Activated B cell treated with CpG ODN at 0.5 μM for 24 hours (primary cell): ENCODE measurements at regions of chr15 and their contacts with region 1.

Region 1: GRCh38 chr15:45198337-45199135 is 10.8 kb upstream of the SHF start:
- DNase-seq: peak; percentile 88
- ATAC-seq: peak; percentile 66
- H3K4me3 Mint-ChIP-seq: no peak overlapping the region
- H3K27ac Mint-ChIP-seq: no peak overlapping the region
- H3K4me1 Mint-ChIP-seq: peaks cover 10% of the 10 kb centered on the region
- H3K27me3 Mint-ChIP-seq: no peaks in the 10 kb centered on the region
- CTCF ChIP-seq: no peak

Region 2: GRCh38 chr15:45022871-45023658 is 175.5 kb before region 1 on chr15 and contains the start of gene SORD:
- CTCF ChIA-PET with region 1: no interaction called
- POLR2A ChIA-PET with region 1: no interaction called
- intact Hi-C with region 1: loop called (anchors 2 kb)
- DNase-seq: peak; percentile 91
- ATAC-seq: peak; percentile 100
- H3K4me3 Mint-ChIP-seq: peak within 1 kb of the TSS; percentile 89
- H3K27ac Mint-ChIP-seq: no peak within 1 kb of the TSS
- H3K4me1 Mint-ChIP-seq: peaks cover 27% of the 10 kb centered on the region
- H3K27me3 Mint-ChIP-seq: peaks cover 15% of the 10 kb centered on the region
- CTCF ChIP-seq: no peak
- total RNA-seq, gene SORD: 15.1 and 15.5 TPM in 2 replicates

Region 3: DNA sequence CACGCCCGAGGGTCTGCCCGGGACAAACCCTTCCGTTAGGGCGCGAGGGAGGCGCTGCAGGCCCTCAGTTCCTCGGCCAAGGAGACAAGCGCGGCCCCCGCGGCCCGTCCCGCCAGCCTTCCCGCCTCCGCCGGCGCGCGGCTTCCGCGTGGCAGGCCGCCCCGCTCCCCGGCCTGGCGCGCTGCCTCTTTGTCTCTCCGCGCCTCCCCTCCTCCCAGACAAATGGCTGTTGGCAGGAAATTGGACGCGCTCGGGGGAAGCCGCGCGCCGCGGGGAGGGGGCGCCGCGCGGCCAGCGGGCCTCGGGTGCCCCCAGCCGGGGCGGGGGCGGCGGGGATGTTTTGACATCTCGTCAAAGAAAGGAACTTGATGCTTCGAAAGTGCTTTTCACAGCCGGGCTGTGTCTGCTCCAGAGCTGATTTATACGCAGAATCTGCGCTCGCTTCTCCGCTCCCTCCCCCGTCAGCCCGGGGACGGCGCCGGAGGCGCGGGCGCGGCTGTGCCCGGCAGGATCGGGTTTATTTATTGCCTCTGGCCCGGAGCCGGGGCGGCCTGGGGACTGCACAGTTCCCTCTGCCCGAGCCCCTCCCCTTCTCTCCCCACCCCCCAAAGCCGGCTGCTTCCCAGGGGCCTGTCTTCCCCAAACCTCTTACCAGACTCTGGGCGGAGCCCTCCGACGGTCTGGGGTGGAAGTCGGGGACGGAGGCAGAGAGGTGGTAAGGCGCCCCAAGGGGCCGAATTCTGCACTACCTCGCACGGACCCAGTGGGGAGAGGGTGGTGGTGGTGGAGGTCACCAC is 31.5 kb before region 1 on chr15:
- CTCF ChIA-PET with region 1: interaction called, 9 read pairs
- POLR2A ChIA-PET with region 1: interaction called, 24 read pairs
- intact Hi-C with region 1: loop called (anchors 1 kb)
- DNase-seq: peak; percentile 75
- ATAC-seq: peak; percentile 95
- H3K4me3 Mint-ChIP-seq: peak overlapping the region; percentile 81
- H3K27ac Mint-ChIP-seq: peak overlapping the region; percentile 80
- H3K4me1 Mint-ChIP-seq: peaks cover 32% of the 10 kb centered on the region
- H3K27me3 Mint-ChIP-seq: no peaks in the 10 kb centered on the region
- CTCF ChIP-seq: no peak

Region 4: GRCh38 chr15:45253330-45253729 is 54.8 kb after region 1 on chr15:
- CTCF ChIA-PET with region 1: no interaction called
- POLR2A ChIA-PET with region 1: no interaction called
- intact Hi-C with region 1: no loop called
- DNase-seq: no peak
- ATAC-seq: no peak
- H3K4me3 Mint-ChIP-seq: no peak overlapping the region
- H3K27ac Mint-ChIP-seq: no peak overlapping the region
- H3K4me1 Mint-ChIP-seq: no peaks in the 10 kb centered on the region
- H3K27me3 Mint-ChIP-seq: peaks cover 4% of the 10 kb centered on the region
- CTCF ChIP-seq: no peak

Region 5: DNA sequence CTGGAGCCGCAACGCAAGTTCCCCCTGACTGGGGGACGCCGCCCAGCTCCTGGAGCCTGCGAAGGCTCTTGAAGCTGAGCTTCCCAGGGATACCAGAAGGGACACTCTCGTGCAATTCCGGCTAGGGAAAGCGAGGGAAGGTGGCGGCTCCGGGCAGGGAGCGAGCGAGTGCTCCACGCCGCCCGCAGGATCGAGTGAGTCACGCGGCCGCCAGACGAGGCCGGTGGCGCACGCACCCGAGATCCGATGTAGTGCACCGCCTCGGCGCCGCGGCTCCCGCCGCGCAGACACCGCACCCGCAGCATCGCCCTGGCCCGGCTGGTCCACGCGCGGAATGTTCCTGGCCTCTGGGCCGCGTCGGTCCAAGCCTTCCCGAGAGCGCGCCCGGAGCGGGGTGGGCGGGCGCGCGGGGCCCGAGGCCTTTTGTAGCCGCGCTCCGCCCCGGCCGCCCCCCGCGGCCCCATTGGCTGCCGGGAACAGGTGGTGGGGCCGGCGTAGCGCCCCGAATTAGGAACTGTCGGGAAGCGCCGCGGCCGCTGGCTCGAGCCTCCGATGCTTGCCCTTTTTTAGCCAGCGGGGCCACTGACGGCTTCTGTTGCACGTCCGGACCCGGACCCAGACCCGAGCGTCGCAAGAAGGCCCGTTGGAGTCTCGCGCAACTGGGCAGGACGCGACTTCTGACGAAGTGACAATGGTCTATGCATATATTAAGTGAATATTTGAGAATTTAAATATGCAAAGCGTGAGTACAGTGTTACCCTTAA is 179.8 kb after region 1 on chr15 and contains the start of gene GATM:
- CTCF ChIA-PET with region 1: no interaction called
- POLR2A ChIA-PET with region 1: interaction called, 5 read pairs
- intact Hi-C with region 1: loop called (anchors 1 kb)
- DNase-seq: peak; percentile 64
- ATAC-seq: peak; percentile 85
- H3K4me3 Mint-ChIP-seq: peak within 1 kb of the TSS; percentile 87
- H3K27ac Mint-ChIP-seq: peak within 1 kb of the TSS; percentile 86
- H3K4me1 Mint-ChIP-seq: peaks cover 25% of the 10 kb centered on the region
- H3K27me3 Mint-ChIP-seq: peaks cover 2% of the 10 kb centered on the region
- CTCF ChIP-seq: no peak
- total RNA-seq, gene GATM: 12.6 and 15.7 TPM in 2 replicates

Region 6: DNA sequence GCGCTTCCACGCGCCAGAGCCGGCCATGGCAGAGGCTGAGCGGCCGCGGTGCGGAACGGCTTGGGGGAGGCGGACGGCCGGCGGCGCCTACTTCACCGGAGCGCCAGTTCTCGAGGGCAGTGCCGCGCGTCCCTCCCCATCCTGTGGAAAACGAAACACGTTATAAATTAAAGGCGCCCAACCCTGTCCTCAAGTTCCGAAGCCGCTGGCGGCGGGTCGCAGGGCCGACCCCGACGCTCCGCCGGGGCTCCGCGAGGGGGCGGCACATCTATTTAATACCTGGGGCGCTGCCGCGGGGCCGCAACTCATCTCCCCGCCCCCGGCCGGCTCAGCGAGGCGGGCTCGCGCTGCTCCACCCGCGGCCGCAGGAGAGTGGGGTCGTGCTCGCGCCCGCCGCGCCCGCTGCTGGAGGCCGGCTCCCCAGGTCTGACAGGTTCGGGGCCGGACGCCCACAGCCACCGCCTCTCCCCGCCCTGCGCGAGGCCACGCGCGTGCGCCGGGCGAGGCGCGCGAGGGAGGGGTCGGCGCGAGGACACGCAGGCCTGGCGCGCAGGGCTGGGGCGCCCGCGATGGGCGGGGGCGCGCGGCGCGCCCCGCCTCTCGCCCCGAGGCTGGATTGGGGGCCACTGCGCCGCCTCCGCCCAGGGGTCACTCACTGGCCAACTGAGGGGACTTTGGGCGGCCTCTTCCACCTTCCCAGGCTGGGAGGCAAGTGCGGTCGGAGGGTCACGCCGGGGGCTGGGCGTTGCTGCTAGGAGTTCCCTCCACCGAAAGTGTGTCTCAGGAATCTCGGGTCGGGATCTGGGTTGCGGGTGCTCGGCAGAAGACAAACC is 324.0 kb after region 1 on chr15 and contains the start of gene SLC30A4:
- CTCF ChIA-PET with region 1: no interaction called
- POLR2A ChIA-PET with region 1: interaction called, 6 read pairs
- intact Hi-C with region 1: loop called (anchors 5 kb)
- DNase-seq: peak; percentile 76
- ATAC-seq: peak; percentile 86
- H3K4me3 Mint-ChIP-seq: peak within 1 kb of the TSS; percentile 90
- H3K27ac Mint-ChIP-seq: peak within 1 kb of the TSS; percentile 83
- H3K4me1 Mint-ChIP-seq: peaks cover 42% of the 10 kb centered on the region
- H3K27me3 Mint-ChIP-seq: no peaks in the 10 kb centered on the region
- CTCF ChIP-seq: no peak
- total RNA-seq, gene SLC30A4: 3.7 and 3.9 TPM in 2 replicates